Endothelial cell of umbilical vein (primary cell): ENCODE measurements at regions of chr1 and their contacts with region 1.

Region 1: GRCh38 chr1:8090241-8090702 is 64.2 kb upstream of the ERRFI1 start:
- DNase-seq: peak; percentile 95
- H3K4me3 ChIP-seq: no peak overlapping the region
- H3K27ac ChIP-seq: peak overlapping the region; percentile 90
- H3K4me1 ChIP-seq: peaks cover 42% of the 10 kb centered on the region
- H3K27me3 ChIP-seq: no peaks in the 10 kb centered on the region
- CTCF ChIP-seq: no peak
- POLR2A ChIP-seq: peak; percentile 19

Region 2: DNA sequence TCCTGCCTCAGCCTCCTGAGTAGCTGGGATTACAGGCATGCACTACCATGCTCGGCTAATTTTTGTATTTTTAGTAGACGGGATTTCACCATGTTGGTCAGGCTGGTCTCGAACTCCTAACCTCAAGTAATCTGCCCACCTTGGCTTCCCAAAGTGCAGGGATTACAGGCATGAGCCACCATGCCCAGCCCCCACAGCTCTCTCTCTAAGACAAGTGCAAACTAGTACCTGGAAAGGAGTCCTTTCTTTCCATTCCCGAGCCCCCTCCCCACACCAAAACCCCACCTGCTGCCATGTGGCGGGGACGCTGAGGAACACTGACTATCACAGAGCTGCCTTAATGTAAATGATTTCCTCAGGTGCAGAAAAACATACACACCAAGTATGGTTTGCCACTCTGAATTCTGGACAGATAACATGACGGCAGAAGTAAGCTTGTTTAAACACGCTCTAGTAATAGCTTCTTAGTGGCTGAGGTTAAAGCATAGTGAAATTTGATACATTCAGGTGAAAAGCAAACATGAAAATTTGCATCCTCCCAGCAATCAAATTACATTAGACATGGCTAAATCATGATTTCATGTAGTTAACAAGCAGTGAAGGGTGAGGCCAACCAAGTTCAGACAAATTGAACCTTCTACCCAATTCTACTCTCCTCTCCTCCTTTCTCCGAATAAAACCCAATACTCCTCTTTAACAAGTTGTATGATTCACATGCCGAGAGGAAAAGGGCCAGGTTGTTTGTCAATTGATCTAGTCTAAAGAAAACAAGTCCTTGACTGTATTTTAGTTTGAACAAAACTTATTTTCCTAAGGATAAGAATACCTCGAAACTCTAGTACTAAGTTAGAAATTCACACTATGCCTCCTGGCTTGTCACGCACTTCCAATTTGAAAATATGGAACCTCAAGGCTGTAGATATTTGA is 84.0 kb before region 1 on chr1:
- CTCF ChIA-PET with region 1: no interaction called
- POLR2A ChIA-PET with region 1: no interaction called
- dilution Hi-C with region 1: no loop called
- intact Hi-C with region 1: no loop called
- DNase-seq: no peak
- H3K4me3 ChIP-seq: no peak overlapping the region
- H3K27ac ChIP-seq: no peak overlapping the region
- H3K4me1 ChIP-seq: peaks cover 20% of the 10 kb centered on the region
- H3K27me3 ChIP-seq: no peaks in the 10 kb centered on the region
- CTCF ChIP-seq: no peak
- POLR2A ChIP-seq: no peak

Region 3: GRCh38 chr1:8047681-8048445 is 42.4 kb before region 1 on chr1:
- CTCF ChIA-PET with region 1: interaction called, 3 read pairs
- POLR2A ChIA-PET with region 1: no interaction called
- dilution Hi-C with region 1: loop called (anchors 10 kb)
- intact Hi-C with region 1: loop called (anchors 1 kb)
- DNase-seq: peak; percentile 90
- H3K4me3 ChIP-seq: no peak overlapping the region
- H3K27ac ChIP-seq: peak overlapping the region; percentile 81
- H3K4me1 ChIP-seq: peaks cover 29% of the 10 kb centered on the region
- H3K27me3 ChIP-seq: no peaks in the 10 kb centered on the region
- CTCF ChIP-seq: no peak
- POLR2A ChIP-seq: no peak

Region 4: GRCh38 chr1:8061673-8062386 is 28.4 kb before region 1 on chr1:
- CTCF ChIA-PET with region 1: interaction called, 3 read pairs
- POLR2A ChIA-PET with region 1: no interaction called
- dilution Hi-C with region 1: no loop called
- intact Hi-C with region 1: loop called (anchors 1 kb)
- DNase-seq: peak; percentile 52
- H3K4me3 ChIP-seq: no peak overlapping the region
- H3K27ac ChIP-seq: peak overlapping the region; percentile 79
- H3K4me1 ChIP-seq: peaks cover 8% of the 10 kb centered on the region
- H3K27me3 ChIP-seq: no peaks in the 10 kb centered on the region
- CTCF ChIP-seq: no peak
- POLR2A ChIP-seq: no peak

Region 5: DNA sequence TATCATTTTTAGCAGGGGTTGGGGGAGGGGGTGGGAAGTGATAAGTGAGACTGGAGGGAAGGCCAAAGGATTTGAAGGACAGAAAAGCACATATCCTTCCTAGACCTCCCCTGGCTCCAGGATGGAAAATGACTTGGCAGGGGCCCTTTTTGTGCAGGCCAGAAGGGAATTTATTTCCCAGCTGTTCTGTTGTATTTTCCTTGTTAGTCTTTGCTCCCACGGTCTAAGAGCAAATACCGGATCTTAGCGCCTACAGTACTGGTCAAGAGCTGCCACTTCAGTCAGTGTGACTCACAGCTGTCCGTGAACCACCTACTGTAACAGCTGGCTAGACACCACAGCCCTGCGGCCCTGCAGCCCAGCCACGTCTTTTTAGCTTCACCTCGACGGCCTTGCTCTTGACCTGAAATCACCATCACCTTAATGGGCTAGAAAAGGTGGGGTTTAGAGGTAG is 13.1 kb before region 1 on chr1:
- CTCF ChIA-PET with region 1: interaction called, 16 read pairs
- POLR2A ChIA-PET with region 1: interaction called, 5 read pairs
- dilution Hi-C with region 1: no loop called
- intact Hi-C with region 1: loop called (anchors 1 kb)
- DNase-seq: peak; percentile 94
- H3K4me3 ChIP-seq: no peak overlapping the region
- H3K27ac ChIP-seq: peak overlapping the region; percentile 76
- H3K4me1 ChIP-seq: peaks cover 22% of the 10 kb centered on the region
- H3K27me3 ChIP-seq: no peaks in the 10 kb centered on the region
- CTCF ChIP-seq: no peak
- POLR2A ChIP-seq: no peak

Region 6: GRCh38 chr1:8137481-8138244 is 47.4 kb after region 1 on chr1:
- CTCF ChIA-PET with region 1: interaction called, 6 read pairs
- POLR2A ChIA-PET with region 1: interaction called, 3 read pairs
- dilution Hi-C with region 1: no loop called
- intact Hi-C with region 1: loop called (anchors 1 kb)
- DNase-seq: peak; percentile 97
- H3K4me3 ChIP-seq: no peak overlapping the region
- H3K27ac ChIP-seq: peak overlapping the region; percentile 81
- H3K4me1 ChIP-seq: peaks cover 39% of the 10 kb centered on the region
- H3K27me3 ChIP-seq: no peaks in the 10 kb centered on the region
- CTCF ChIP-seq: no peak
- POLR2A ChIP-seq: no peak